Endothelial cell of umbilical vein (primary cell): ENCODE measurements at regions of chr5 and their contacts with region 1.

Region 1: DNA sequence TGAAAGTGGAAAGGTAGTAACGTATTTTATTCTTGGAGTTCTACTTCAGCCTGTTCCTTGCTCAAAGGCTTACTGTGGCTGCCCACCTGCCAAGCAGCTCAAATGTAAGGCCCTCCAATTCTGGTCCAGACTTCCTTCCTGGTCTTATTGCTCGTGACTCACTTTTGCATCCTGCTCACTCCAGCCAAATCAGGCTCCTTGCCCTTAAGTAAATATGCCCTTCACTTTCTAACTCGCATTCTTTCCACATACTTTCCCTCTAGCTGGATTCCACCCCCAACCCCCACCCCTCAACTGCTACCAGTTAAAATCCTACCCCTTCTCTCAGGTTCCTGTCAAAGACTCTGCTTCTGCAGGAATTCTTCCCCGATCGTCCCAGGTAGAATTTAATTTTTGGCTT is 96.6 kb downstream of the GALNT10 start:
- DNase-seq: peak; percentile 95
- H3K4me3 ChIP-seq: peak overlapping the region in 2 of 3 experiments; percentile 13 to 54
- H3K27ac ChIP-seq: peak overlapping the region; percentile 95
- H3K4me1 ChIP-seq: peaks cover 43% of the 10 kb centered on the region
- H3K27me3 ChIP-seq: no peaks in the 10 kb centered on the region
- CTCF ChIP-seq: no peak
- POLR2A ChIP-seq: peak; percentile 79

Region 2: GRCh38 chr5:154189819-154190594 is 97.1 kb before region 1 on chr5:
- CTCF ChIA-PET with region 1: interaction called, 31 read pairs
- POLR2A ChIA-PET with region 1: interaction called, 12 read pairs
- dilution Hi-C with region 1: no loop called
- intact Hi-C with region 1: loop called (anchors 1 kb)
- DNase-seq: peak; percentile 55
- H3K4me3 ChIP-seq: peak overlapping the region; percentile 51 to 80 (median 56)
- H3K27ac ChIP-seq: peak overlapping the region; percentile 61
- H3K4me1 ChIP-seq: peaks cover 19% of the 10 kb centered on the region
- H3K27me3 ChIP-seq: no peaks in the 10 kb centered on the region
- CTCF ChIP-seq: peak; percentile 49 to 69
- POLR2A ChIP-seq: peak; percentile 56

Region 3: GRCh38 chr5:154221371-154221896 is 65.7 kb before region 1 on chr5:
- CTCF ChIA-PET with region 1: no interaction called
- POLR2A ChIA-PET with region 1: no interaction called
- dilution Hi-C with region 1: no loop called
- intact Hi-C with region 1: loop called (anchors 2 kb)
- DNase-seq: peak; percentile 58
- H3K4me3 ChIP-seq: no peak overlapping the region
- H3K27ac ChIP-seq: peak overlapping the region; percentile 60
- H3K4me1 ChIP-seq: peaks cover 23% of the 10 kb centered on the region
- H3K27me3 ChIP-seq: no peaks in the 10 kb centered on the region
- CTCF ChIP-seq: no peak
- POLR2A ChIP-seq: no peak

Region 4: GRCh38 chr5:154308443-154309370 is 21.6 kb after region 1 on chr5:
- CTCF ChIA-PET with region 1: interaction called, 3 read pairs
- POLR2A ChIA-PET with region 1: no interaction called
- dilution Hi-C with region 1: no loop called
- intact Hi-C with region 1: loop called (anchors 1 kb)
- DNase-seq: peak; percentile 45
- H3K4me3 ChIP-seq: no peak overlapping the region
- H3K27ac ChIP-seq: peak overlapping the region; percentile 72
- H3K4me1 ChIP-seq: peaks cover 37% of the 10 kb centered on the region
- H3K27me3 ChIP-seq: no peaks in the 10 kb centered on the region
- CTCF ChIP-seq: no peak
- POLR2A ChIP-seq: no peak

Region 5: DNA sequence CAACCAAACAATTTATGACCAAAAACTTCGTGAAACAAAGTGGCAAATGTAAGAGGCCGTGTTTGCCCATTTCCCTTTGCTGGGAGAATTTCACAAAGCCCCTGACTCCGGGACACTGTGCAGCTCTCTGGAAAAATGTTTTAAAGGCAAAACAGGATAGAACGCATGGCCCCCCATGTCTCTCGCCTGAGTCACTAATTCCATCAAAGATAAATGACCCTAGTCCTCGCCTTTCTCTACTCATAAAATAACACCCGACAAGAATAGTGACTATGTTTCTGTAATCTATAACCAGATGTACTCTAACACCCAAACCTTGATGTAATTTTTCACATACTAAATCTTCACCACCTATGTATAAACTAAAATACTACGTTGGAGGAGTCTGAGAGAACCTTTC is 103.0 kb after region 1 on chr5:
- CTCF ChIA-PET with region 1: interaction called, 3 read pairs
- POLR2A ChIA-PET with region 1: interaction called, 3 read pairs
- dilution Hi-C with region 1: no loop called
- intact Hi-C with region 1: loop called (anchors 2 kb)
- DNase-seq: peak; percentile 71
- H3K4me3 ChIP-seq: no peak overlapping the region
- H3K27ac ChIP-seq: peak overlapping the region; percentile 54
- H3K4me1 ChIP-seq: peaks cover 6% of the 10 kb centered on the region
- H3K27me3 ChIP-seq: no peaks in the 10 kb centered on the region
- CTCF ChIP-seq: no peak
- POLR2A ChIP-seq: no peak

Region 6: DNA sequence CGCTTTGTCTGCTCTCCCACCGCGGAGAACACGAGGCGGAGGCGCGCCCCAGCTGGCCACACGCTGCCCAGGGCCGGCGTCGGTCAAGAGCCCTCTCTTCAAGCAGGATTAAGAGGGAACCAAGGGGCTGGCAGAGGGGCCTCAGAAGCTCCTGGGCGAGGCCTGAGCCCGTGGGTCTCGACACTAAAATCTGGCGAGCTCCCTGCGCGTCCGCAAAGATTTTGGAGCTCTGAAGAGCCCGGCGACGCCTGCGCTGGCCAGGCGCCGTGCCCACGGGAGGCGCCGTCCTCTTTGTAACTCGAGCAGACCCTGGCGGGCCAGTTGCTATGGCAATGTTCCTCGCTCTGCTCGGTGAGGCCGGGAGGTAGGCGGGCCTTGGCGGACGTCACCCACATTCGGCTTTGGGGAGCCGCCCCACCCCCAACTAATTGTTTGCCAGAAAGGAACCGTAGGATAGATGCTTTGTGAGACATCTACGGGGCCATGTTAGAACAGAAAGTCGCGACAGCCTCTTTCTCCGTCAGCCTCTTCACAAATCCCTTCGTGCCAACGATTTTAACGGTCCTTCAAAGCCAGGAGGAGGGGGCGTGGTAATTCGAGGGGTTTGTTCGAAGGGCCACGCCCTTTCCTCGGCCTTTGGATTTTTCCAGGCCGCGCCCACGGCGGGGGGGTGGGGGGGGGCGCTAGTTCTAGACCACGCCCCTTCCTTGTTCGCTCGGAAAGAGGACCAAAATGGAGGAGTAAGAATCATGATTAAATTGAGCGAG is 570.6 kb after region 1 on chr5:
- CTCF ChIA-PET with region 1: no interaction called
- POLR2A ChIA-PET with region 1: no interaction called
- dilution Hi-C with region 1: no loop called
- intact Hi-C with region 1: loop called (anchors 10 kb)
- DNase-seq: peak; percentile 97
- H3K4me3 ChIP-seq: peak overlapping the region; percentile 94 to 100 (median 95)
- H3K27ac ChIP-seq: peak overlapping the region; percentile 95
- H3K4me1 ChIP-seq: peaks cover 27% of the 10 kb centered on the region
- H3K27me3 ChIP-seq: no peaks in the 10 kb centered on the region
- CTCF ChIP-seq: peak in 1 of 2 donors; percentile 8
- POLR2A ChIP-seq: peak; percentile 82

Region 7: GRCh38 chr5:154868702-154869101 is 581.6 kb after region 1 on chr5:
- CTCF ChIA-PET with region 1: no interaction called
- POLR2A ChIA-PET with region 1: no interaction called
- dilution Hi-C with region 1: no loop called
- intact Hi-C with region 1: no loop called
- DNase-seq: no peak
- H3K4me3 ChIP-seq: no peak overlapping the region
- H3K27ac ChIP-seq: no peak overlapping the region
- H3K4me1 ChIP-seq: no peaks in the 10 kb centered on the region
- H3K27me3 ChIP-seq: no peaks in the 10 kb centered on the region
- CTCF ChIP-seq: no peak
- POLR2A ChIP-seq: no peak